Heart right ventricle (tissue), 16 donors: ENCODE measurements at regions of chr2 and their contacts with region 1.

Region 1: DNA sequence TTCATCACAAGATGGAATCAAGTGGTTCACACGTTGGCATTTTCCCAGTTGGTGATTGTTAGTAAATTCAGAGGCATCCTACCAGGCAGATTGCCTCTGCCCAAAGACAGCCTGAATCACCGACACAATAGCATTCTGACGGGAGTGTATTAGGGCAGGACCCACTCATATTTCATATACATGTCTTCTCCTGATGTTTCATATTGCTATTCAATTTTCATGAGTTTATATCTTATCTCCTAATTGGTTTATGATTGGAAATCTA is 14.5 kb upstream of the BMP10 start:
- DNase-seq: no peak
- ATAC-seq: no peak
- H3K4me3 ChIP-seq: no peak overlapping the region
- H3K27ac ChIP-seq: no peak overlapping the region
- H3K4me1 ChIP-seq: peaks cover 0 to 8% (median 0%) of the 10 kb centered on the region in 9 donors
- H3K27me3 ChIP-seq: peaks cover 0 to 68% (median 29%) of the 10 kb centered on the region in 7 donors
- CTCF ChIP-seq: no peak

Region 2: GRCh38 chr2:68569604-68570003 is 316.1 kb before region 1 on chr2:
- intact Hi-C with region 1: no loop called
- DNase-seq: no peak
- ATAC-seq: no peak
- H3K4me3 ChIP-seq: no peak overlapping the region
- H3K27ac ChIP-seq: no peak overlapping the region
- H3K4me1 ChIP-seq: no peaks in the 10 kb centered on the region
- H3K27me3 ChIP-seq: no peaks in the 10 kb centered on the region
- CTCF ChIP-seq: no peak

Region 3: DNA sequence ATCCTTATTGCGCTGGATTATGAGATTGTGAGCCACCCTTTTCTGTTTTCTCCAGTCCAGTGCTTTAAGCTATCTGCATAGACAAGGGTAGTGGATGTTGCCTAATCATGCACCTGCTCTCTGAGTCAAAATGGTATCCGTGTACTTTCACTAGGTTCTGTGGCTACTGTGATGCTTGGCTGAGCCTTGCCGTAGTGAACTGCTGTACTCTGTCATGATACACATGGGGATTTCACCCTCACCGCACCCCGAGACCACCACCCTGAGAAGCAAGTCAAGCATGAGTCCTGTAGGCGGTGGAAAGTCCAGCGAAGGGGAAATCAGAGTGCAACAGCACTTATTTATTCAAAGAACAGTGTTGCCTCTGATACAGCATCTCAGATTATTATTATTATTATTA is 96.1 kb before region 1 on chr2:
- intact Hi-C with region 1: loop called in 1 of 10 experiments (anchors 1 kb)
- DNase-seq: no peak
- ATAC-seq: no peak
- H3K4me3 ChIP-seq: no peak overlapping the region
- H3K27ac ChIP-seq: no peak overlapping the region
- H3K4me1 ChIP-seq: peaks cover 0 to 63% (median 3%) of the 10 kb centered on the region in 9 donors
- H3K27me3 ChIP-seq: no peaks in the 10 kb centered on the region
- CTCF ChIP-seq: no peak

Region 4: GRCh38 chr2:69095305-69095704 is 209.6 kb after region 1 on chr2:
- intact Hi-C with region 1: no loop called
- DNase-seq: peak in 1 of 2 donors; percentile 25
- ATAC-seq: peak in 7 of 8 donors; percentile 58 to 87 (median 80)
- H3K4me3 ChIP-seq: no peak overlapping the region
- H3K27ac ChIP-seq: peak overlapping the region in 5 of 10 donors; percentile 18 to 64 (median 30)
- H3K4me1 ChIP-seq: peaks cover 0 to 66% (median 18%) of the 10 kb centered on the region in 9 donors
- H3K27me3 ChIP-seq: no peaks in the 10 kb centered on the region
- CTCF ChIP-seq: no peak